A673 (cell line): ENCODE measurements at regions of chr1 and their contacts with region 1.

Region 1: DNA sequence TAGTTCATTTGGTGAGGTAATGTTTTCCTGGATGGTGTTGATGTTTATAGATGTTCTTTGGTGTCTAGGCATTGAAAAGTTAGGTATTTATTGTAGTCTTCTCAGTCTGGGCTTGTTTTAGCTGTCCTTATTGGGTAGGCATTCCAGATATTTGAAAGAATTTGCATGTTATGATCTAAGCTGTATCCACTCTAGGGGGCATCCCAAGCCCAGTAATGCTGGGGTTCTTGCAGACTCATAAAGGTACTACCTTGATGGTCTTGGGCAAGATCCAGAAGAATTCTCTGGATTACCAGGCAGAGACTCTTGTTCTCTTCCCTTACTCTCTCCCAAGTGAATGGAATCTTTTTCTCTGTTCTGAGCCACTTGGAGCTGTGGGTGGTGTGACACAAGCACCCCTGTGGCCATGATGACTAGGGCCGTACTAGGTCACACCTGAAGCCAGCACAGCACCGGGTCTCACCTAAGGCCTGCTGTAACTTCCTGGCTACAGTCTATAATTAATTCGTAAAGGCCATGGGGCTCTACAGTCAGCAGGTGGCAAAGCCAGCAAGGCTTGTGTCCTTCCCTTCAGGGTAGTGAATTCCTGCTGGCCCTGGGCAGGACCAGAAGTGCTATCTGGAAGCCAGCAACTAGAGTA is 74.8 kb upstream of the PDE4B start:
- DNase-seq: peak; percentile 9
- H3K4me3 ChIP-seq: no peak overlapping the region
- H3K27ac ChIP-seq: no peak overlapping the region
- H3K4me1 ChIP-seq: no peaks in the 10 kb centered on the region
- H3K27me3 ChIP-seq: no peaks in the 10 kb centered on the region
- CTCF ChIP-seq: peak; percentile 20; the same call in 1 of the 2 replicates

Region 2: GRCh38 chr1:65939636-65940035 is 221.7 kb after region 1 on chr1:
- CTCF ChIA-PET with region 1: no interaction called
- POLR2A ChIA-PET with region 1: no interaction called
- intact Hi-C with region 1: loop called (anchors 5 kb)
- DNase-seq: no peak
- H3K4me3 ChIP-seq: no peak overlapping the region
- H3K27ac ChIP-seq: no peak overlapping the region
- H3K4me1 ChIP-seq: no peaks in the 10 kb centered on the region
- H3K27me3 ChIP-seq: no peaks in the 10 kb centered on the region
- CTCF ChIP-seq: no peak